Mammary epithelial cell (primary cell): ENCODE measurements at regions of chr5 and their contacts with region 1.

Region 1: DNA sequence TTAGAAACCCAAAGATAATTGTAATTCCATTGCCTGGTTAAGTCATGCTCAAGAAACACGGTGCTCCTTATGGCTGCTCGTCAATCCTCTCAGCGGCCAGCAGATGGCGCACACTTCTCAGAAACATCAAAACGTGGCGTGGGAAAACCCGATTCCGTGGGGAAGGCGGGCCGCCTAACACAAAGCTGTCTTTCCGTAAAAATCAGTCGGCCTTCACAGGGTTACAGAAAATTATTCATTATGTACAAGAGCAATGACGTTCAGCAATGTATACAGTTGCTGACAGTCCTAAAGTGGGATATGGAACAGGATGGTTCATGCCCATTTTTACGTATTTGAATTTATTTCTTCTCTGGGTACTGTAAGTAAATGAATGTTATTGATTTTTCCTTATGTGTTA is 83.5 kb downstream of the PDE4D start:
- DNase-seq: peak; percentile 40
- H3K4me3 ChIP-seq: peak overlapping the region; percentile 28 to 34 (median 30)
- H3K27ac ChIP-seq: no peak overlapping the region
- H3K4me1 ChIP-seq: no peaks in the 10 kb centered on the region
- H3K27me3 ChIP-seq: no peaks in the 10 kb centered on the region
- CTCF ChIP-seq: peak; percentile 87 to 88

Region 2: DNA sequence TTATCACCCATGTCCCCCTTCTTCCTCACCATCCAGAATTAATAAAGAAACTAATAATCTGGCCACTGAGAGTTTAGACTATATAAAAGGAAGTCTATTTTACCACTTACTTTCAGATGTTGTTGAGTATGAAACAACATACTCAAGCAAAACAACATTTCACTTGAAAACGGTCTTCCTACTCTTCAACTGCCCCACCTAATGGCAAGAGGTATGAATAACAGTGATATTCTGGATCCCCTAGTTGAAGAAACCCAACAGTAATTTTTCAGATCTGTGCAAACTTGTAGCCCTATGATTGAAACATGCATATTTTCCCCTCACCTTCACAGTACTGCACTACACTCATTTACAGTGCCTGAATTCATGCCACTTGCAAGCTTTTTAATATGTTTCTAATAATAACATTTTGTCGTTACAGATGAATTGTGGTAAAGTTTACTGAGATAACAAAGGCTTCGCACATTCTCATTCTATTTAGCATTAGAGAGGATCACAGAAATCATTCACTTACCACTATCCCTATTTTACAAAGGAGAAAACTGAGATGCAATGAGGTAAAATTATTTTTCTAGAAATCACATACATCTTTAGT is 351.4 kb after region 1 on chr5:
- CTCF ChIA-PET with region 1: interaction called, 3 read pairs
- dilution Hi-C with region 1: no loop called
- in situ Hi-C with region 1: loop called (anchors 10 kb)
- intact Hi-C with region 1: loop called (anchors 1 kb)
- DNase-seq: peak; percentile 11
- H3K4me3 ChIP-seq: no peak overlapping the region
- H3K27ac ChIP-seq: no peak overlapping the region
- H3K4me1 ChIP-seq: no peaks in the 10 kb centered on the region
- H3K27me3 ChIP-seq: peaks cover 4% of the 10 kb centered on the region
- CTCF ChIP-seq: peak; percentile 56 to 71

Region 3: DNA sequence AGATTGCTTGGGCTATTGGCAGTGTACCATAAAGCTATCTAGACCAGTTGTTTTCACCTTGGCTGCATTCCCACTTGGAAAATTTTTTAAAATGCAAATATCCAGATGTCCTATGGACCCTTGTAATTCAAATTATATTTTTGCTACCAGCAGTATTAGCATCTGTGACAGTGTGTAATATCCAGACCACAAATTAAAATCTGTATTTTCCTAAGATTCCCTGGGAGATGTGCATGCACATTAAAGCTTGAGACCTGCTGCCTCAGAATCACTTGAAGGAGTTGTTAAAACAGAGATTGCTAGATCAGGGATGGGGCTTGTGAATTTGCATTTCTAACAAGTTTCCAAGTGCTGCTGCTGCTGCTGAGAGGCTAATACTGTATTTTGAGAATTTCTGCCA is 464.7 kb after region 1 on chr5:
- CTCF ChIA-PET with region 1: no interaction called
- dilution Hi-C with region 1: loop called (anchors 25 kb)
- in situ Hi-C with region 1: loop called in 1 of 2 experiments (anchors 10 kb)
- intact Hi-C with region 1: no loop called
- DNase-seq: no peak
- H3K4me3 ChIP-seq: no peak overlapping the region
- H3K27ac ChIP-seq: no peak overlapping the region
- H3K4me1 ChIP-seq: no peaks in the 10 kb centered on the region
- H3K27me3 ChIP-seq: no peaks in the 10 kb centered on the region
- CTCF ChIP-seq: no peak

Region 4: DNA sequence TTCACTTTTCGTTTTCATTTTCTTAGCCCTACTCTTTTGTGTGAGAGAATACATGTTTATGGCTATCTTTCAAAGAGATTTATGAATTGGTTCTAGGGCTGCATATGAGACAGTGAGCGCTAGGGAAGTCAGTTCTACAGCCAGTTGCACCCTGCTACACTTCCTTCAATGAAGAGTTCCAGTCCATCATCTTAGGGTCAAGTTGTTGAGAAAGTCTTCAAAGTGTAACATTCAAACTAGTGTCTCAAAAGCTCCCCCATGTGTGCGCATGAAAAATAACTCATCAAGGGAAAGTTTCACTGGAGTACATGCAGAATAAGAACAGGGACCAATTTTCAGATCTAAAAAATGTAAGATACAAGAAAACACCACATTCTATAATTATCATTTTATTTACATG is 572.7 kb after region 1 on chr5:
- CTCF ChIA-PET with region 1: no interaction called
- dilution Hi-C with region 1: no loop called
- in situ Hi-C with region 1: loop called in 1 of 2 experiments (anchors 10 kb)
- intact Hi-C with region 1: loop called (anchors 2 kb)
- DNase-seq: peak; percentile 29
- H3K4me3 ChIP-seq: no peak overlapping the region
- H3K27ac ChIP-seq: no peak overlapping the region
- H3K4me1 ChIP-seq: no peaks in the 10 kb centered on the region
- H3K27me3 ChIP-seq: peaks cover 3% of the 10 kb centered on the region
- CTCF ChIP-seq: peak; percentile 31 to 57

Region 5: DNA sequence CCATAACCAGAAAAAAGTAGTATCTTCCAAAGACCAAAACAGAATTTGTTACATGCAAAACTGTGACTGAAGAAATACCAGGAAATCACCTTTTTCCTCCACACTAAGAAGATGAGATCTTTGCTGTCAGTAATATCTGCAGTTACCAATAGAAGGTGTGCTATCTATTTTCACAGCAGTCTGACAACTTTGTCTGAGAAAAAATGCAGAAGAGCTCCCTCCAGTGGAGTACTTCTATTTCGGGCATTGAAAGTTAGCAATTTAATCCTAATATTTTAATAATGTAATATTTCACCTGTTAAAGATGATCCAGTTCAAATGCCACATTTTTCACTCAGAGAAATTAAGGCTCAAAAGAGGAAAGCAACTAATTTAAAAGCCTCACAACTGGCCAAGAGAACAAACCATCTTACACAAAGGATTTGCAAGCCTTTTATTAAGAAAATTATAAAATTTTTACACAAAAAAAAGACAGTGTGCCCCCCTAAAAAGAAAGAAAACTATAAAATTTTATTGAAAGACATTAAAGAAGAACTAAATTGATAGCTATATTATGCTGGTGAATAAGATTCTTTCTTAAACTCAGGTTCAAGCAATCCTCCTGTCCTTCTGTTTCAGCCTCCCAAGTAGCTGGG is 839.4 kb after region 1 on chr5:
- CTCF ChIA-PET with region 1: interaction called, 6 read pairs
- dilution Hi-C with region 1: no loop called
- in situ Hi-C with region 1: loop called (anchors 10 to 25 kb)
- intact Hi-C with region 1: loop called (anchors 5 kb)
- DNase-seq: peak; percentile 43
- H3K4me3 ChIP-seq: no peak overlapping the region
- H3K27ac ChIP-seq: no peak overlapping the region
- H3K4me1 ChIP-seq: peaks cover 7% of the 10 kb centered on the region
- H3K27me3 ChIP-seq: no peaks in the 10 kb centered on the region
- CTCF ChIP-seq: peak; percentile 72 to 76